Mammary epithelial cell (primary cell): ENCODE measurements at regions of chr21 and their contacts with region 1.

Region 1: GRCh38 chr21:27570306-27570868 is 603.5 kb upstream of the ADAMTS5 start:
- DNase-seq: peak; percentile 96
- H3K4me3 ChIP-seq: peak overlapping the region in 1 of 3 experiments; percentile 2
- H3K27ac ChIP-seq: peak overlapping the region; percentile 93
- H3K4me1 ChIP-seq: peaks cover 38% of the 10 kb centered on the region
- H3K27me3 ChIP-seq: no peaks in the 10 kb centered on the region
- CTCF ChIP-seq: no peak

Region 2: GRCh38 chr21:26842976-26843932 is 727.1 kb before region 1 on chr21:
- CTCF ChIA-PET with region 1: interaction called, 5 read pairs
- dilution Hi-C with region 1: no loop called
- in situ Hi-C with region 1: loop called in 1 of 2 experiments (anchors 10 kb)
- intact Hi-C with region 1: loop called (anchors 2 kb)
- DNase-seq: peak; percentile 91
- H3K4me3 ChIP-seq: peak overlapping the region; percentile 70 to 85 (median 74)
- H3K27ac ChIP-seq: peak overlapping the region; percentile 80
- H3K4me1 ChIP-seq: peaks cover 27% of the 10 kb centered on the region
- H3K27me3 ChIP-seq: no peaks in the 10 kb centered on the region
- CTCF ChIP-seq: peak in 1 of 2 donors; percentile 29

Region 3: DNA sequence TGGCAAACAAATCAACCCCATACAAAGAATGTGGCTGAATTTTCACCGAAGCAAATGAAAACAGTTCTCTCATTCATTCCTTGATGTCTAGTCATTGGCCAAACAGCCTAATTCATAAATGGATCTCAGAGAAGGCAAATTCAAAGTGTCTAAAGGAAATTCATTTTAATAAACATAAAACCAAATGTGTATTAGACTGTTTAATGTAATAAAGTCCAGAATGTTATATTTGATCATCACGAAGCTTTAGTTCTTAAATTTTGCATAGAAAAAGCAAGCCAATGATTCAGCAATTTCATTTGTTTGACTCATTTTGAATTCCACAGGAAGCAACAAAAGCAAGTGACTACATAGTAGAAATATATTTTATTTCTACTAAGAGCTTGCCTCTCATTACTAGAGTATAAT is 224.3 kb before region 1 on chr21:
- CTCF ChIA-PET with region 1: no interaction called
- dilution Hi-C with region 1: no loop called
- in situ Hi-C with region 1: no loop called
- intact Hi-C with region 1: no loop called
- DNase-seq: peak; percentile 5
- H3K4me3 ChIP-seq: no peak overlapping the region
- H3K27ac ChIP-seq: no peak overlapping the region
- H3K4me1 ChIP-seq: no peaks in the 10 kb centered on the region
- H3K27me3 ChIP-seq: no peaks in the 10 kb centered on the region
- CTCF ChIP-seq: no peak

Region 4: DNA sequence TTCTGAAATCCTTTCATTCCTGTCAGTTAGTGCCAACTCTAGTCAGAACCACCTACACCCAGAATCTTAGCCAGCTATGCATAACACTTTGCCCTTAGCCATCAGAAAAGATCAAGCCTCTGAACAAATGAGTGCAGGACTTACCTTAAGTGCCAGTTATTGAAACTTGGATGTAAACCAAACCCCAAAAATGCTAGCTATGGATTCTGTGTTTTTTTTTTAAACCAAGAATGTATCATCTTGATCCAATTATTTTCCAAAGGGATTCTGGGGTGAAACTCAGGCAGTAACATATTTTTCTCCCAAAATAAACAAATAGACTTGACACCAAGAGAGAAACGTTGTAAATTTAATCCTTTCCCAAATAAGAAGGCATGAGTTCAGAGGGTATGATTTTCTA is 64.9 kb before region 1 on chr21:
- CTCF ChIA-PET with region 1: no interaction called
- dilution Hi-C with region 1: loop called (anchors 5 kb)
- in situ Hi-C with region 1: no loop called
- intact Hi-C with region 1: no loop called
- DNase-seq: peak; percentile 70
- H3K4me3 ChIP-seq: no peak overlapping the region
- H3K27ac ChIP-seq: peak overlapping the region; percentile 31
- H3K4me1 ChIP-seq: peaks cover 22% of the 10 kb centered on the region
- H3K27me3 ChIP-seq: no peaks in the 10 kb centered on the region
- CTCF ChIP-seq: no peak

Region 5: DNA sequence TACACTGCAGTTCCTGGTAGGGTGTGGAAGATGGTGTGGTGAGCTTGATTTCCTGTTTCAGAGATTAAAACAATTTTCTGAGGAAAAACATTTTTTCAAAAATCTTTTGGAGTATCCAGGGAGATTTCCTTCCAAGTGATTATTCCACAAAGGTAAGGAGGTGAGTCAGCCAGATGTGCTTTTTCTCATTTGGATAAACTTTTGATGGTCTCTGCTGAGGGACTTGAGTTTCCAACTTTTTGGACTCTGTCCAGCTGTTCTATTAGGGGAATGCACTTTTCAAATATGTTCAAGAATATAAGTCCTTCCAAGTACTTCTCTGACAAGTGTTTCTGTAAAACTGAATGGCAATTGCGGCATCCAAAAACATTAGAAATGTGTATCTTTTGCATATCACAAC is 25.3 kb after region 1 on chr21:
- CTCF ChIA-PET with region 1: no interaction called
- dilution Hi-C with region 1: no loop called
- in situ Hi-C with region 1: no loop called
- intact Hi-C with region 1: no loop called
- DNase-seq: no peak
- H3K4me3 ChIP-seq: no peak overlapping the region
- H3K27ac ChIP-seq: no peak overlapping the region
- H3K4me1 ChIP-seq: no peaks in the 10 kb centered on the region
- H3K27me3 ChIP-seq: no peaks in the 10 kb centered on the region
- CTCF ChIP-seq: no peak

Region 6: GRCh38 chr21:27648560-27648959 is 78.2 kb after region 1 on chr21:
- CTCF ChIA-PET with region 1: no interaction called
- dilution Hi-C with region 1: loop called (anchors 5 kb)
- in situ Hi-C with region 1: loop called in 1 of 2 experiments (anchors 5 kb)
- intact Hi-C with region 1: loop called (anchors 1 kb)
- DNase-seq: peak; percentile 85
- H3K4me3 ChIP-seq: no peak overlapping the region
- H3K27ac ChIP-seq: peak overlapping the region; percentile 98
- H3K4me1 ChIP-seq: peaks cover 47% of the 10 kb centered on the region
- H3K27me3 ChIP-seq: no peaks in the 10 kb centered on the region
- CTCF ChIP-seq: no peak

Region 7: DNA sequence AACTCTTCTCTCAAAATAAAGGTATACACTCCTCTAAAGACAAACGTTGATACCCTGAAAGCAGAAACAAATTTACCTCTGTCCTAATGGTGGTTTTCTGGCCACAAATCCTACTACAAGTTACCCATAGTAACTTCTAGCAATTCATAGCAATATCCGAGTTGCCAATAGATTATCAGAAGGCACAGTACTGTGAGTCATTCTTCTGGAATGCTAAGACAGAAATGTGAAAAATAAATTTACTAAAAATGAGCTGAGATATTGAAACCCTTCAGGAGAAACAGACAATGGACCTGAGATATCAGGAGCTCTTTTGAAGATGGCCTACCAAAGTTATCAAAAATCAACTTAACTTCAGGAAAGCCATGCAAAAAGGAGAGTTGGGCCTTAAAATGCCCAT is 111.5 kb after region 1 on chr21:
- CTCF ChIA-PET with region 1: no interaction called
- dilution Hi-C with region 1: no loop called
- in situ Hi-C with region 1: no loop called
- intact Hi-C with region 1: loop called (anchors 2 kb)
- DNase-seq: peak; percentile 43
- H3K4me3 ChIP-seq: no peak overlapping the region
- H3K27ac ChIP-seq: peak overlapping the region; percentile 71
- H3K4me1 ChIP-seq: peaks cover 6% of the 10 kb centered on the region
- H3K27me3 ChIP-seq: no peaks in the 10 kb centered on the region
- CTCF ChIP-seq: no peak

Region 8: GRCh38 chr21:27700974-27701614 is 130.7 kb after region 1 on chr21:
- CTCF ChIA-PET with region 1: interaction called, 9 read pairs
- dilution Hi-C with region 1: no loop called
- in situ Hi-C with region 1: loop called (anchors 5 to 10 kb)
- intact Hi-C with region 1: loop called (anchors 1 kb)
- DNase-seq: peak; percentile 77
- H3K4me3 ChIP-seq: no peak overlapping the region
- H3K27ac ChIP-seq: no peak overlapping the region
- H3K4me1 ChIP-seq: no peaks in the 10 kb centered on the region
- H3K27me3 ChIP-seq: no peaks in the 10 kb centered on the region
- CTCF ChIP-seq: peak; percentile 76 to 92